Motor neuron (in vitro differentiated cells): ENCODE measurements at regions of chr1 and their contacts with region 1.

Region 1: GRCh38 chr1:239898062-239898730 is 193.5 kb upstream of the FMN2 start:
- ATAC-seq: peak; percentile 85 to 99 (median 96)
- H3K4me3 ChIP-seq: no peak overlapping the region
- H3K27ac ChIP-seq: no peak overlapping the region
- H3K4me1 ChIP-seq: peaks cover 6 to 8% of the 10 kb centered on the region in 2 donors

Region 2: GRCh38 chr1:239389703-239390102 is 508.5 kb before region 1 on chr1:
- in situ Hi-C with region 1: loop called in 1 of 9 experiments (anchors 10 kb)
- ATAC-seq: no peak
- H3K4me3 ChIP-seq: no peak overlapping the region
- H3K27ac ChIP-seq: no peak overlapping the region
- H3K4me1 ChIP-seq: no peaks in the 10 kb centered on the region

Region 3: GRCh38 chr1:239417986-239418640 is 480.1 kb before region 1 on chr1:
- in situ Hi-C with region 1: loop called in 3 of 9 experiments (anchors 25 kb)
- ATAC-seq: no peak
- H3K4me3 ChIP-seq: no peak overlapping the region
- H3K27ac ChIP-seq: no peak overlapping the region
- H3K4me1 ChIP-seq: peaks cover 7 to 17% of the 10 kb centered on the region in 2 donors